ENCODE measurements at regions of chr19 and their contacts with region 1.

Region 1: DNA sequence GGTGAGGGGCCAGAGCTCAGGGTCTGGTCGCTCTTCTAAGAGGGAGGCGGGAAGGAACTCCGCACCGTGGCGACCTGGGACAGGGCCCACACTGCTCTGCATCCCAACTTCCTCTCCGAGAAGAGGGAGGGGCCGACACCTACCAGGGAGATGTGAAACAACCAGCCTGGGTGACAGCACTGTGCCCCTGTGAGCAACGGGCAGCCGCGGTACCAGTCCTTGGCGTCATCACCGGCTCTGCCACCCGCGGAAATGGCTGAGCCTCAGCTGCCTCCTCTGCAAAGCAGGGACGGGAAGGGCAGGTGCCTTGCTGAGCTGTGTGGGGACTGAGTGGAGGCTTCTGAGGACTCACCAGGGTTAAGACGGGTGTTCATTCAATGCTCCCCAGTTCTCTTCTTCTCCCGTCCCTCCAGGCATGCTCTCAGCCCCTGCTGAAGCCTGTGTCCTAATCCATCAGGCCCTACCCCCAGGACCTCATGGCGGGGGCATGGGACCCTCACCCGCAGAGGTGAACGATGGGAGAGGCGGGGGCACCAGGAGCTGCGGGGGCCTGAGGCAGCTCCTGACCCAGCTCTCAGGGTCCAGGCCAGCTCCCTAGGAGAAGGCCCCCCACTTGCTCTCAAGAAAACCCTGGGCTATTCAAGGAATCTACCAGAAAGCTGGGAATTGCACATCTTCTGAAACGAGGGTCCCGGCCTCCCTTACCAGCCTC is 9.3 kb downstream of the ZNF787 start:
- DNase-seq: peak; percentile 72
- H3K4me3 Mint-ChIP-seq: peak overlapping the region; percentile 32
- H3K27ac Mint-ChIP-seq: peak overlapping the region; percentile 65
- H3K4me1 Mint-ChIP-seq: peaks cover 32% of the 10 kb centered on the region
- H3K27me3 Mint-ChIP-seq: no peaks in the 10 kb centered on the region

Region 2: GRCh38 chr19:56162258-56162657 is 50.5 kb after region 1 on chr19:
- intact Hi-C with region 1: loop called (anchors 10 kb)
- DNase-seq: no peak
- H3K4me3 Mint-ChIP-seq: no peak overlapping the region
- H3K27ac Mint-ChIP-seq: no peak overlapping the region
- H3K4me1 Mint-ChIP-seq: peaks cover 13% of the 10 kb centered on the region
- H3K27me3 Mint-ChIP-seq: no peaks in the 10 kb centered on the region